Activated T-helper 1 cell treated with anti-CD3 and anti-CD28 coated beads, Interleukin-12 subunit alpha, Interleukin-12 subunit beta, Interleukin-2, Interleukin-4 antibody, amounts not matched to agents 30 ng/mL and 10 ng/mL and 1 ng/mL, durations not matched to agents 14 hours and 24 hours and 36 hours (primary cell): ENCODE measurements at regions of chr3 and their contacts with region 1.

Region 1: DNA sequence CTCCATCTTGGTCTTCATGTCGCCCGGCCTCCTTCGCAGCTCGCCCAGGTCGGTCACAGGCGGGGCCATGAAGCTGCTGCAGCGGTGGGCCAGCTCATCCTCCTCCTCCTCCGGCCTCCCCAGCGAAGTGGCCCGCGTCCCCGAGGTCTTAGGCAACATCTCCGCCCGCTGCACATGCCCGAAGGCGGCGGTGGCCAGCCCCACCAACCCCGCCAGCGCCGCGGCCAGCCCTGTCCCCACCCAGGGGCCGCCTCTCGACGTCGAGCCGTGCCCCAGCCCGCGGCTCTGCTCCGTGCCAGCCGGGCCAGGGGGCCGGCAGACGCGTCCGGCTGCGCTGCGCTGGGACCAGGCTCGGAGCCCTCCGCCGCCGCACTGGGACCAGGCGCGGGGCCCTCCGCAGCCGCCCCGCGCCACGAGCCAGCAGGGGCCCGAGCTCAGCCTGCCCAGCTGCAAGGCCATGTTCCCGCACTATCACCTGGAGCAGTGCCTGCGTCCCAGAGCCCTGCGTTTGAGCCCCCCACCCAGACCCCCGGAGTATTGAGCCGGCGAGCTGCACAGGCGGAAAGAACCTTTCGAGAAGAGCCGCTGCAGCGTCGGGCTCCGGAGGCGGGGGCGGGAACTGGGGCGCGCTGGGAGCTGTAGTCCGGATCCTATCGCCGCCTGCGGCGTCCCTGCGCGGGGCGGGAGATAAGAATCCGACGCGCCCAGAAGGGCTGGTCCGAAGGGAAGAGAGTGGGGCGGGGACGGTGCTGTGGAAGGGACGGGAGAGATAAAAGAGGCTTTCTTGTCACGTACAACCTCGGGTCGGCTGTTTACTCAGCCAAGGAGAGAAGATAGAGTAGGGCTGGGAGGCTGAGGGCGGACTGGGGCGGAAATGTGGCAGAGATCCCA is at the start of gene CPOX:
- DNase-seq: peak; percentile 84
- H3K4me3 Mint-ChIP-seq: peak within 1 kb of the TSS; percentile 95
- H3K27ac Mint-ChIP-seq: peak within 1 kb of the TSS; percentile 95
- H3K4me1 Mint-ChIP-seq: peaks cover 63% of the 10 kb centered on the region
- H3K27me3 Mint-ChIP-seq: no peaks in the 10 kb centered on the region
- total RNA-seq, gene CPOX: 42.2 and 47.4 TPM in 2 replicates

Region 2: GRCh38 chr3:97764407-97765238 is 828.7 kb before region 1 on chr3 and contains the start of gene ARL6:
- intact Hi-C with region 1: loop called (anchors 5 kb)
- DNase-seq: peak; percentile 66
- H3K4me3 Mint-ChIP-seq: peak within 1 kb of the TSS; percentile 96
- H3K27ac Mint-ChIP-seq: peak within 1 kb of the TSS; percentile 95
- H3K4me1 Mint-ChIP-seq: peaks cover 31% of the 10 kb centered on the region
- H3K27me3 Mint-ChIP-seq: peaks cover 3% of the 10 kb centered on the region
- total RNA-seq, gene ARL6: 5.9 and 6.2 TPM in 2 replicates

Region 3: GRCh38 chr3:98329392-98330124 is 263.7 kb before region 1 on chr3:
- intact Hi-C with region 1: loop called (anchors 5 kb)
- DNase-seq: peak; percentile 28
- H3K4me3 Mint-ChIP-seq: no peak overlapping the region
- H3K27ac Mint-ChIP-seq: no peak overlapping the region
- H3K4me1 Mint-ChIP-seq: peaks cover 24% of the 10 kb centered on the region
- H3K27me3 Mint-ChIP-seq: peaks cover 32% of the 10 kb centered on the region

Region 4: GRCh38 chr3:98556164-98557130 is 36.8 kb before region 1 on chr3:
- intact Hi-C with region 1: loop called (anchors 5 kb)
- DNase-seq: peak; percentile 81
- H3K4me3 Mint-ChIP-seq: peak overlapping the region; percentile 83
- H3K27ac Mint-ChIP-seq: peak overlapping the region; percentile 98
- H3K4me1 Mint-ChIP-seq: peaks cover 94% of the 10 kb centered on the region
- H3K27me3 Mint-ChIP-seq: no peaks in the 10 kb centered on the region

Region 5: GRCh38 chr3:98817547-98818041 is 224.3 kb after region 1 on chr3:
- intact Hi-C with region 1: loop called (anchors 1 kb)
- DNase-seq: no peak
- H3K4me3 Mint-ChIP-seq: no peak overlapping the region
- H3K27ac Mint-ChIP-seq: no peak overlapping the region
- H3K4me1 Mint-ChIP-seq: no peaks in the 10 kb centered on the region
- H3K27me3 Mint-ChIP-seq: no peaks in the 10 kb centered on the region

Region 6: DNA sequence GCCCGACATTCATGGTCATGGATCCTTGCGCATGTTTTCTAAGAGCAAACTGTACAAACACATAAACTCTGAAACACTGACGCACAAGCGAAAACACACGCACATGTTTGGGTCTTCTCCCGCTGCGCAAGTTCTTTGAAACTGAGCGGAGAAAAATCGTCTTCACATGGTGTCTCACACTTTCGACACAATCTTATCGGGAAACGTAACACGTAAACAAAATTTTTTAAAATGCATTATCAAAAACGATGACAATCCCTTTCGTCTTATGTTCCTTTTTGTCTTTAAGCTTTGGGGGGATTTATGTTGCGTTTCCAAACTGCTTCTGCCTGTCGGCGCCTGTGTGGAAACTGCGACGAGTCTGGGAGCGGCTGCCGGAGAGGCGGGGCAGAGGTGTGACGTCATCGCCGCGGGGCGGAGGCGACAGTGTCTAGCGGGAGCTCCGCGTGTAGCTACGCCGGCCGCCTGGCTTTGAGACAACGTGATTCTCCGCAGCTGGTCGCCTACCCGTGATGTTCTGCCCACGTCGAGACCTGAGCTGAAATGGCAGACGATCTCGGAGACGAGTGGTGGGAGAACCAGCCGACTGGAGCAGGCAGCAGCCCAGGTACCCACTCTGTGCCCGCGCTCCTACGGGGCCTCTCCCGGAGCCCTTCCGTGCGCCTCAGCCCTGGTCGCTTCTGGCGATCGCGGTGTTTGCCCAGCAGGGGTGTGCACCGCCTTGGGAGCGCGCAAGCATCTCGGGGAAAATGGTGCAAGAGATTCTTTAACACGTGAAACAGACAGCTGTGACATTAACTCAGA is 1224.3 kb after region 1 on chr3 and contains the start of gene CMSS1:
- intact Hi-C with region 1: loop called (anchors 5 kb)
- DNase-seq: peak; percentile 92
- H3K4me3 Mint-ChIP-seq: peak within 1 kb of the TSS; percentile 88
- H3K27ac Mint-ChIP-seq: peak within 1 kb of the TSS; percentile 90
- H3K4me1 Mint-ChIP-seq: peaks cover 35% of the 10 kb centered on the region
- H3K27me3 Mint-ChIP-seq: no peaks in the 10 kb centered on the region
- total RNA-seq, gene CMSS1: 108 and 121 TPM in 2 replicates